Head of caudate nucleus (tissue), 42 donors: ENCODE measurements at regions of chr3 and their contacts with region 1.

Region 1: DNA sequence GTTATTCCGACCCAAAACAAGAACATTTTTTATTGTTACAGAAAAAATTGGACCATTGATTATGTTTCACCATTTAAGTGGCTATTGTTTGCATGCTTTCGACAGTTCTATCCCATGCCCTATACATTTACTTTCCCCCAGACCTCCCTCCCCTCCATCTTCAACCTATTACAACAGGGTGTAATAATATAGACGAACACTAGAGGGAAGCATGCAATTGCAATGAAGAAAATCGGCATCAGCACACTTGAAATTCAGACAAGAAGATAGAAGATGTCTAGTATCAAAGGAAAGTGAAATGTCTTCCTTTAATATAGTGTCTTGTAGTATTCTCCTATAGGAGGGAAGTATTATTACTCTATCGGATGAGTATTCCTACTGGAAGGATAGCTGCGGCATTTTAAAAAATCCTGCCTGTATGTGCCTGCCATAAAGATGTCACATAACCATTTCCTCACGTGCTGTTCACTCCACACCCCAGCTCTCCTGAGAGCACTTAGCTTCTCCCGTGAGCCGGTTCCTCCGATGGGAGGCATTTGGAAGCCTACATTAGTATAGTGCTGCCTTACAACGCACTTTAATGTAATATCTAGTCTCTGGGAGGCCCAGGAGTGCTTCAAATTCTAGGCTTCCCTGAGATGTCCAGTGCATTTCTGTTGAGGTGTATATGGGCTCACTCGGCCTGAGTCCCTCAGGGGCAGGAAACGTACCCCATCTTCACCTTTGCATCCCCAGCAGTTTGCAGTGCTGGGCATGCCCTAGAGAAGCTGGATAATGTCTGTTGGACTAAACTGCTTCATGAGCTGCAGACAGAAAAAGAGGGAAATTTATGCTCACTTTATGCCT is 17.8 kb upstream of the ERICH6 start:
- DNase-seq: peak in 3 of 42 donors; percentile 26 to 66 (median 28)

Region 2: DNA sequence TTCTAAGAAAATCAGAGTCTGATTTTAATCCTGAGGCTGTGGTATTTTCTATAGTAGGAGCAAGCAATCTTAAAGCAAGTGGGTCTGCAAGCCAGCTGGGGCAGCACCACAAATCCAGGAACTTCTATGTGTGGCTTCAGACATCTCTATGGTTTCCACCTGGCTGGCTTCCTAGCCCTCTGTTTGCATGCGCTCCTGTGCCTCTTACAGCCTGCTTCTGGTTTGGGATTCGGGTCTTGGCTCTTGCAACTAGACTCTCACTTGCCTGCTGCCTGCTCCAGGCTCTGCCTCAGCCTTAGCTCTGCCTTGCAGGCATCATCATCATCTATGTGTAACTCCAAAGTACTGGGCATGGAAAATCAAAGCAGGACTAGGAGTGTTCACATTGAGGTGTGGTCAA is 140.3 kb after region 1 on chr3:
- intact Hi-C with region 1: loop called (anchors 5 kb)
- DNase-seq: no peak

Region 3: GRCh38 chr3:151146071-151146730 is 424.7 kb after region 1 on chr3:
- intact Hi-C with region 1: loop called (anchors 2 kb)
- DNase-seq: peak; percentile 55 to 91 (median 78)